ENCODE measurements at regions of chr10 and their contacts with region 1.

Region 1: GRCh38 chr10:13776861-13777311 is 190.1 kb downstream of the PRPF18 start:
- DNase-seq: no peak
- ATAC-seq: peak; percentile 38 to 52
- H3K4me3 ChIP-seq: no peak overlapping the region
- H3K27ac ChIP-seq: no peak overlapping the region
- H3K4me1 ChIP-seq: no peaks in the 10 kb centered on the region
- H3K27me3 ChIP-seq: no peaks in the 10 kb centered on the region
- CTCF ChIP-seq: no peak

Region 2: GRCh38 chr10:13669182-13669865 is 107.6 kb before region 1 on chr10:
- intact Hi-C with region 1: loop called (anchors 5 kb)
- DNase-seq: no peak
- ATAC-seq: peak in 1 of 2 donors; percentile 50
- H3K4me3 ChIP-seq: no peak overlapping the region
- H3K27ac ChIP-seq: no peak overlapping the region
- H3K4me1 ChIP-seq: peaks cover 2% of the 10 kb centered on the region
- H3K27me3 ChIP-seq: no peaks in the 10 kb centered on the region
- CTCF ChIP-seq: no peak